Heart right ventricle (tissue), 16 donors: ENCODE measurements at regions of chr5 and their contacts with region 1.

Region 1: GRCh38 chr5:54832858-54833257 is 152.5 kb downstream of the ESM1 start:
- DNase-seq: no peak
- ATAC-seq: no peak
- H3K4me3 ChIP-seq: no peak overlapping the region
- H3K27ac ChIP-seq: peak overlapping the region in 1 of 10 donors; percentile 15
- H3K4me1 ChIP-seq: peaks cover 0 to 23% (median 8%) of the 10 kb centered on the region in 9 donors
- H3K27me3 ChIP-seq: no peaks in the 10 kb centered on the region
- CTCF ChIP-seq: no peak

Region 2: GRCh38 chr5:54646356-54647101 is 186.3 kb before region 1 on chr5:
- intact Hi-C with region 1: loop called in 2 of 10 experiments (anchors 5 kb)
- DNase-seq: peak; percentile 83
- ATAC-seq: peak; percentile 91 to 96 (median 93)
- H3K4me3 ChIP-seq: peak overlapping the region in 4 of 10 donors; percentile 10 to 24 (median 21)
- H3K27ac ChIP-seq: peak overlapping the region; percentile 5 to 87 (median 70)
- H3K4me1 ChIP-seq: peaks cover 15 to 51% (median 35%) of the 10 kb centered on the region in 9 donors
- H3K27me3 ChIP-seq: no peaks in the 10 kb centered on the region
- CTCF ChIP-seq: no peak

Region 3: DNA sequence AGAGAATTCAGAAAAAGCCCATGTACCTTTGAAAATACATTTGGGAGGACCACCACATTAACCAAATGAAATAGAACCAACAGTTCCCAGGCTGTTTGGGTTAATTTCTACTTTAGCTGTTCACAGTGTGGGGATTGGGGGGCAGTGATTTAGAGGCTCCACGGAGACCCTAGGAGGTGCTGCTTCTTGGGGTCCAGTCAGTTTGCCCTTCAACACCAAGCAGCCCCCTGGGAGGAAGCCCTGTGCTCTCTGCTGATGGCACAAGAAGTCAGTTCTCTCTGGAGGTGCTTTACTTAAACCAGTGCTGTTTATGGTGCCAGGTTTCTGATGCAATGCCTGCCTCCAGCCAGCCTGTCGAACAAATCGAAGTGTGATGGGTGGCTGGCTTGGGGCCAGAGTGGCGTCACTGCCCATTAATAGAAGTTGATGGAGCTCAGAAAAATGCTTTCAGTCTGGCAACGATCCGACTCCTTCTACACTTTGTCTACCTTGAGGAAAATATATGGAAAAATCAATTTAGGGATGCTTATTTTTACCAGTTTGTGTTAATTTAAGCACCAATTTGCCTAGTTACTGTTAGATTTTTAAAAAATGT is 181.3 kb before region 1 on chr5:
- intact Hi-C with region 1: loop called in 3 of 10 experiments (anchors 5 kb)
- DNase-seq: peak; percentile 82 to 85
- ATAC-seq: peak in 6 of 8 donors; percentile 55 to 76 (median 66)
- H3K4me3 ChIP-seq: no peak overlapping the region
- H3K27ac ChIP-seq: peak overlapping the region in 6 of 10 donors; percentile 11 to 77 (median 64)
- H3K4me1 ChIP-seq: peaks cover 5 to 49% (median 21%) of the 10 kb centered on the region in 9 donors
- H3K27me3 ChIP-seq: no peaks in the 10 kb centered on the region
- CTCF ChIP-seq: no peak

Region 4: DNA sequence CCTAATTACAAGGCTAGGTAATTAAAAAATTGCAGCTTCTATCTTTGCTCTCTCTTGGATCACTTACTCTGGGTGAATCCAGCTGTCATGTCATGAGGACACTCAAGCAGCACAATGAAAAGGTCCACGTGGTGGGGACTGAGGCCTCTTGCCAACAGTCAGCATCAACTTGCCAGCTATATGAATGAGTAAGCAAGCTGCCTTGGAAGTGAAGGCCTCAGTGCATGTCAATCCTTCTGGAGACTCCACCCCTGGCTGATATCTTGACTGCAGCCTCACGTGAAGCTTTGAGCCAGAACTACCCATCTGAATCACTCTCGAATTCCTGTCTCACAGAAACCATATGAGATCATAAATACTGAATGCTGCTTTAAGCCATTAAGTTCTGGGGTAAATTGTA is 174.8 kb before region 1 on chr5:
- intact Hi-C with region 1: loop called in 2 of 10 experiments (anchors 5 kb)
- DNase-seq: peak; percentile 25 to 31
- ATAC-seq: peak in 4 of 8 donors; percentile 22 to 71 (median 51)
- H3K4me3 ChIP-seq: no peak overlapping the region
- H3K27ac ChIP-seq: no peak overlapping the region
- H3K4me1 ChIP-seq: peaks cover 0 to 34% (median 12%) of the 10 kb centered on the region in 9 donors
- H3K27me3 ChIP-seq: no peaks in the 10 kb centered on the region
- CTCF ChIP-seq: no peak

Region 5: GRCh38 chr5:54703133-54703532 is 129.7 kb before region 1 on chr5:
- intact Hi-C with region 1: no loop called
- DNase-seq: peak; percentile 40 to 46
- ATAC-seq: peak; percentile 62 to 82 (median 72)
- H3K4me3 ChIP-seq: no peak overlapping the region
- H3K27ac ChIP-seq: peak overlapping the region in 7 of 10 donors; percentile 7 to 64 (median 47)
- H3K4me1 ChIP-seq: peaks cover 6 to 77% (median 42%) of the 10 kb centered on the region in 9 donors
- H3K27me3 ChIP-seq: no peaks in the 10 kb centered on the region
- CTCF ChIP-seq: no peak

Region 6: DNA sequence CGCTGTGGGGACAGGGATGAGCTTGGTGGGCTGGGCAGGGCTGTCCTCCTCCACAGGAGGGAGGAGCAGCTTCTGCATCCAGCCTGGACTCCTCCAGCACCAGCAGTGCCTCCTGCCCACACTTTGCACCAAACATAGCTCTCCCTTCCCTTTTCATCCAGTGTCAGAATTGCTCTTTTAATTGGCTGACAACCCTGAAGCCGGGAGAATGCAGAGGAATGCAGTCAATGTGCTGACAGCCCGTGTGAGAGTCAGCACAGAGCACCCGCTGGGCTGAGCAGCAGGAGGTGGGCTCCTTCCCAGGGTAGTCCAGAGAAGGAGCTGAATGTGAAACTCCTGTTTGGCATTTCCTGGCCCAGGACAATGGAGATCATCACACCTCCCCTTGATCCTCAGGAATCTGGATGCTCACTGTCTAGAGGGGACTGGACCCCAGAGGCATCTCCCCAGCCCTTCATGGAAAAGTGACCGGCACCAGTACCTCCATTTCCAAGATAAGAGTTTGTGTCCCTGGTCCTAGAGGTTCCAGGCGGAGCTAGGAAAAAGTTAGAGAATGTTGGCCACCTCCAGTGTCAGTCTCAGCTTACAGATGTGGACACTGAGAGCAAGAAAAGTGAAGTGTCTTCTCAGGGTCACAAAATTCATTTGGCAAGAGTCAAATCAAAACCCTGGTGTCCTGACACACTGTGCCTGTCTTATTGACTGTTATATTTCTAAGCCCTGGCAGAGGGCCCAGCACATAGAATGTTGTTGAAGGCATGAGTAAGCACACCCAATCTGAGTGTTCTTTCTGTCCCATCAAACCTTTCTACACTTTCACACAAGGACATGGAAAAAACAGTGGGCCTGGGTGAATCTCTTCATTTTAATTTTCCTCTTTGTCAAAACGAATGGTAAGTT is 113.2 kb before region 1 on chr5:
- intact Hi-C with region 1: loop called in 2 of 10 experiments (anchors 10 kb)
- DNase-seq: peak; percentile 42 to 59
- ATAC-seq: peak; percentile 78 to 93 (median 88)
- H3K4me3 ChIP-seq: no peak overlapping the region
- H3K27ac ChIP-seq: peak overlapping the region; percentile 34 to 89 (median 75)
- H3K4me1 ChIP-seq: peaks cover 5 to 48% (median 24%) of the 10 kb centered on the region in 9 donors
- H3K27me3 ChIP-seq: no peaks in the 10 kb centered on the region
- CTCF ChIP-seq: peak in 3 of 9 donors; percentile 7 to 23 (median 21)

Region 7: GRCh38 chr5:54785729-54786591 is 46.9 kb before region 1 on chr5:
- intact Hi-C with region 1: loop called in 3 of 10 experiments (anchors 5 kb)
- DNase-seq: peak; percentile 54 to 65
- ATAC-seq: peak; percentile 65 to 99 (median 94)
- H3K4me3 ChIP-seq: no peak overlapping the region
- H3K27ac ChIP-seq: peak overlapping the region in 9 of 10 donors; percentile 28 to 72 (median 48)
- H3K4me1 ChIP-seq: peaks cover 0 to 22% (median 7%) of the 10 kb centered on the region in 9 donors
- H3K27me3 ChIP-seq: no peaks in the 10 kb centered on the region
- CTCF ChIP-seq: peak in 6 of 9 donors; percentile 13 to 37 (median 24)

Region 8: DNA sequence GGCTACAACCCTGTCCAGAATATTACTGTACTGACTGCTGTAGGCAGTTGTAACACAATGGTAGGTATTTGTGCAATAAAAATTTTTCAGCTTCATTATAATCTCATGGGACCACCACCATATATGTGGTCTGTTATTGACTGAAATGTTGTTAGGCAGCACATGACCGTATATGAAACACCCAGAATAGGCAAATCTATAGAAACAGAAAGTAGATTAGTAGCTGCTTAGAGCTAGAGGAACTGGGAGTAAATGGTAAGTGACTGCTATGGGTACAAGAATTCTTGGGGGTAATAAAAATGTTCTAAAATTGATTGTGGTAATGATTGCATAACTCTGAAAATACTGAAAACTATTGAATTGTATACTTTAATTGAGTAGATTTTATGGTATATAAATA is 33.2 kb before region 1 on chr5:
- intact Hi-C with region 1: no loop called
- DNase-seq: no peak
- ATAC-seq: no peak
- H3K4me3 ChIP-seq: no peak overlapping the region
- H3K27ac ChIP-seq: no peak overlapping the region
- H3K4me1 ChIP-seq: peaks cover 0 to 11% (median 0%) of the 10 kb centered on the region in 9 donors
- H3K27me3 ChIP-seq: no peaks in the 10 kb centered on the region
- CTCF ChIP-seq: no peak

Region 9: GRCh38 chr5:54883374-54884212 is 50.7 kb after region 1 on chr5:
- intact Hi-C with region 1: no loop called
- DNase-seq: peak; percentile 16 to 47
- ATAC-seq: peak; percentile 61 to 81 (median 68)
- H3K4me3 ChIP-seq: peak overlapping the region; percentile 24 to 63 (median 58)
- H3K27ac ChIP-seq: peak overlapping the region in 2 of 10 donors; percentile 13 to 48
- H3K4me1 ChIP-seq: peaks cover 0 to 11% (median 7%) of the 10 kb centered on the region in 9 donors
- H3K27me3 ChIP-seq: peaks cover 0 to 48% (median 21%) of the 10 kb centered on the region in 7 donors
- CTCF ChIP-seq: no peak